GM12878 (cell line): ENCODE measurements at regions of chr3 and their contacts with region 1.

Region 1: DNA sequence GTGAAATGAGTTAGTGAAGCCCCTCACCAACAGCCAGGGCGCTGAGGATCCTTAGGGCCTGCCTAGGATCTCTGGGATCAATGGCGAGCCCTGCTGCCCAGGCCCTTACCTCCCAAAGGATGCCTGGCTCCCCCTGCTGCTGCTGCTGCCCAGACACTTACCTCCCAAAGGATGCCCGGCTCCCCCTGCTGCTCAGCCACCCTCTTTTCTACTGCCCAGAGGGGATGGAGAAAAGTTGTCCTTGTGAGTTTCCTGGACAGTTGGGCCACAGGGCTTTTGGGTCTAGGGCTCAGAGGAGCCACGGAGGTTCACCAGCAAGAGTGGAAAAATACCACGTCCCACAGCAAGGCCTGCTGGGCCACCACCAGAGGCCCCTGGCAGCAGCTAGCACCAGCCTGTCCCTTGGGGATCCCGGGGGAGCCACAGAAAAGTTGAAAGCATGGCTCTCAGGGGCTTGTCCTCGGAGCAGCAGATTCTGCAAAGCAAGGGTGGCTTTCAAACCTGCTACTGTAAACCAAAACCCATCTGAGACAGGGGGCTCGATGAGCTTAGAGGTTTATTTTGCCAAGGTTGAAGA is 59.4 kb downstream of the SLC6A6 start:
- DNase-seq: no peak
- ATAC-seq: peak; percentile 85
- H3K4me3 ChIP-seq: no peak overlapping the region
- H3K27ac ChIP-seq: no peak overlapping the region
- H3K4me1 ChIP-seq: no peaks in the 10 kb centered on the region
- H3K27me3 ChIP-seq: no peaks in the 10 kb centered on the region
- CTCF ChIP-seq: peak; percentile 65 to 96 (median 70); a peak in 5 of 6 replicates
- EP300 ChIP-seq: no peak
- POLR2A ChIP-seq: no peak
- RAD21 ChIP-seq: peak; percentile 87

Region 2: DNA sequence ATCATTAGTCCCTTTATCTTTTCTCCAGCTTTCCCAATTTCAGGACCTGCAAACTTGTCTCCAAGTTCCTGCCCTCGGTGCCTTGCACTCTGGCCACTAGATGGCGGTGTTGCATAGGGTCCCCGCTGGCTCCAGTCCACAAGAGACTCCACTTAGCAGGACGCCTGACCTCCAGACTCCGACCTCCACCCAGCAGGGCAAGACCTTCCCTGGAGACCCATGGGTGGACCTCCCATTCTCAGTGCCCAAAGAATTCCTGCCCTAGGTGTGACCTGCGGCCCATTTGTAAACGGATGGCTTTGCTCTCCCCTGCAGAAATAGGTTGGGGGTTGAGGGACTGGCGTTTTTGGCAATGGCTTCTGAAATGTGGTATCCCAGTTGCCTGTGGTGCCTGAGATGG is 200.6 kb before region 1 on chr3:
- CTCF ChIA-PET with region 1: interaction called, 25 read pairs
- POLR2A ChIA-PET with region 1: no interaction called
- RAD21 ChIA-PET with region 1: interaction called, 15 read pairs
- SMC1A ChIA-PET with region 1: interaction called, 24 read pairs
- in situ Hi-C with region 1: loop called (anchors 5 kb)
- intact Hi-C with region 1: no loop called
- DNase-seq: peak; percentile 16
- ATAC-seq: peak; percentile 94
- H3K4me3 ChIP-seq: no peak overlapping the region
- H3K27ac ChIP-seq: no peak overlapping the region
- H3K4me1 ChIP-seq: no peaks in the 10 kb centered on the region
- H3K27me3 ChIP-seq: peaks cover 0 to 4% of the 10 kb centered on the region in 2 experiments; a peak in 2 of 4 replicates
- CTCF ChIP-seq: peak; percentile 89 to 95 (median 94); a peak in 5 of 6 replicates
- EP300 ChIP-seq: no peak
- POLR2A ChIP-seq: no peak
- RAD21 ChIP-seq: peak; percentile 98

Region 3: GRCh38 chr3:14426063-14426620 is 35.7 kb before region 1 on chr3:
- CTCF ChIA-PET with region 1: interaction called, 15 read pairs
- POLR2A ChIA-PET with region 1: no interaction called
- RAD21 ChIA-PET with region 1: interaction called, 11 read pairs
- SMC1A ChIA-PET with region 1: interaction called, 18 read pairs
- in situ Hi-C with region 1: no loop called
- intact Hi-C with region 1: no loop called
- DNase-seq: no peak
- ATAC-seq: peak; percentile 76
- H3K4me3 ChIP-seq: 0 out of 2 replicates have a peak overlapping the region, but pooled peaks have one; percentile 28
- H3K27ac ChIP-seq: peak overlapping the region; percentile 65
- H3K4me1 ChIP-seq: peaks cover 80% of the 10 kb centered on the region
- H3K27me3 ChIP-seq: no peaks in the 10 kb centered on the region
- CTCF ChIP-seq: peak in 2 of 3 experiments; percentile 13 to 22; a peak in 1 of 6 replicates
- EP300 ChIP-seq: no peak
- POLR2A ChIP-seq: no peak
- RAD21 ChIP-seq: no peak

Region 4: GRCh38 chr3:14431892-14432834 is 29.7 kb before region 1 on chr3:
- CTCF ChIA-PET with region 1: interaction called, 17 read pairs
- POLR2A ChIA-PET with region 1: interaction called, 4 read pairs
- RAD21 ChIA-PET with region 1: interaction called, 11 read pairs
- SMC1A ChIA-PET with region 1: interaction called, 18 read pairs
- in situ Hi-C with region 1: no loop called
- intact Hi-C with region 1: no loop called
- DNase-seq: peak; percentile 90
- ATAC-seq: peak; percentile 87
- H3K4me3 ChIP-seq: peak overlapping the region; percentile 60
- H3K27ac ChIP-seq: peak overlapping the region; percentile 99
- H3K4me1 ChIP-seq: peaks cover 66% of the 10 kb centered on the region
- H3K27me3 ChIP-seq: no peaks in the 10 kb centered on the region
- CTCF ChIP-seq: no peak
- EP300 ChIP-seq: peak; percentile 51 to 71; a peak in 2 of 4 replicates
- POLR2A ChIP-seq: peak; percentile 87
- RAD21 ChIP-seq: no peak